Breast epithelium (tissue), 4 donors: ENCODE measurements at regions of chr15 and their contacts with region 1.

Region 1: DNA sequence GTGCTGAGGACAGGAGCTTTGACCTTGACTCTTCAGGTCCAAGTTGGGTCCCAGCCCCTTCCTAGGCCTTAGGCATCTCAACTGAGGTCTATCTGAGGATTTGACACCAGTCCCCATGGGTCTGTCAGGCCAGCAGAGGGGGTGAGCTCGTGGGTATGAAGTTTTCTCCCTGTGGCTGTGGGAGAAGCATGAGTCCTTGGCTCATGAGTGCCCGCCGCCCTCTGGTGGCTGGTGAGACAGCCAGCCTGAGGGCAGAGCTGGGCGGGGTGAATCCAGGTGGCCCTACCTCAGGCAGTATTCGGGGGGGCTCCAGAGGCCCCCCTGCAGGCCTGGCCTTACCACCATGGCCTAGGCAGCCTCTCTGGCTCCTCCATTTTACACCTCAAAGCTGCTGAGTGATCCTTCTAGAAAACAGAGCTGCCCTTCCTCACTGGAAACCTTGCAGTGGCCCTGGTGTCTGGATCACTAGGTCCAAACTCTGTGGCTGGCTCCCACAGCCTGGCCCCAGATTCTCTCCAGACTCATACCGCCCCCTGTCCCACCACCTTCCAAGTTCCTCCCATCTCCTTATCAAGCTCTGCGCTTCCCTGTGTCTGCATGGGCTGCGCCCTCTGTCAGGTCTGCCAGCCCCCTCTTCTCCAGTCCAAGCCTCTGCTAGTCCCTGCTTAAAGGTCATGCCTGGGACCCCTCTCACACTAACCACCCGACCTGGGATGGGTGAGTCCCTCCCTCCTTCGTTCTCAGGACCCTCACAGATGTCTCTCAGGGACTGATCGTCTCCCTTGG is 16.1 kb downstream of the SH2D7 start:
- DNase-seq: peak; percentile 66 to 75
- H3K4me3 ChIP-seq: no peak overlapping the region
- H3K27ac ChIP-seq: no peak overlapping the region
- H3K4me1 ChIP-seq: no peaks in the 10 kb centered on the region
- H3K27me3 ChIP-seq: no peaks in the 10 kb centered on the region
- CTCF ChIP-seq: peak; percentile 88 to 96 (median 90)
- POLR2A ChIP-seq: no peak

Region 2: GRCh38 chr15:77966540-77967290 is 141.8 kb before region 1 on chr15:
- intact Hi-C with region 1: loop called (anchors 5 kb)
- DNase-seq: no peak
- H3K4me3 ChIP-seq: no peak overlapping the region
- H3K27ac ChIP-seq: no peak overlapping the region
- H3K4me1 ChIP-seq: no peaks in the 10 kb centered on the region
- H3K27me3 ChIP-seq: no peaks in the 10 kb centered on the region
- CTCF ChIP-seq: peak; percentile 61 to 78 (median 76)
- POLR2A ChIP-seq: no peak